ENCODE measurements at regions of chr12 and their contacts with region 1.

Region 1: GRCh38 chr12:68745904-68746571 is at the start of gene SLC35E3:
- DNase-seq: peak; percentile 94
- H3K4me3 Mint-ChIP-seq: peak within 1 kb of the TSS; percentile 96
- H3K27ac Mint-ChIP-seq: peak within 1 kb of the TSS; percentile 78
- H3K4me1 Mint-ChIP-seq: peaks cover 23% of the 10 kb centered on the region
- H3K27me3 Mint-ChIP-seq: no peaks in the 10 kb centered on the region
- CTCF ChIP-seq: no peak
- total RNA-seq, gene SLC35E3: 7.3 and 7.6 TPM in 2 replicates

Region 2: GRCh38 chr12:68358532-68359485 is 387.2 kb before region 1 on chr12:
- CTCF ChIA-PET with region 1: no interaction called
- POLR2A ChIA-PET with region 1: interaction called, 7 read pairs
- intact Hi-C with region 1: loop called (anchors 2 kb)
- DNase-seq: peak; percentile 76
- H3K4me3 Mint-ChIP-seq: no peak overlapping the region
- H3K27ac Mint-ChIP-seq: no peak overlapping the region
- H3K4me1 Mint-ChIP-seq: peaks cover 4% of the 10 kb centered on the region
- H3K27me3 Mint-ChIP-seq: no peaks in the 10 kb centered on the region
- CTCF ChIP-seq: peak; percentile 56

Region 3: DNA sequence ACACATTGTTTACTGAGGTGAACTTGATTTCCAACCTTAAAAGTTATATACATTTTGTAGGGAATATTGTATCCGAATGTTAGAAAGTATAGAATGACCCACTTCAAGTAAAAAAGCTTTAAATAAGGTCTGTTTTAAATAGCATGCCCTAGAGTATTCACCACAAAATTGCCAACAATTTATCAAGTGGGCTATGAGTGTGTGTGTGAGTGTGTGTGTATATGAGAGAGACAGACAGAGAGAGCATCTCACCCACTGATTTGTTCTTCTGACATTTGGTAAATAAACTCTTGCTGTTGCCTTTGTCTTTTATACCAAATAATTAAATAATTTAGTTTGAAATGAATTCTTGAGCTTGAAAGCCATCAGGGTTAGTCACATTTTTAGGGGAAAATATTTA is 165.1 kb before region 1 on chr12:
- CTCF ChIA-PET with region 1: no interaction called
- POLR2A ChIA-PET with region 1: no interaction called
- intact Hi-C with region 1: no loop called
- DNase-seq: no peak
- H3K4me3 Mint-ChIP-seq: no peak overlapping the region
- H3K27ac Mint-ChIP-seq: no peak overlapping the region
- H3K4me1 Mint-ChIP-seq: peaks cover 6% of the 10 kb centered on the region
- H3K27me3 Mint-ChIP-seq: no peaks in the 10 kb centered on the region
- CTCF ChIP-seq: no peak

Region 4: GRCh38 chr12:68781728-68782127 is 35.7 kb after region 1 on chr12:
- CTCF ChIA-PET with region 1: interaction called, 4 read pairs
- POLR2A ChIA-PET with region 1: interaction called, 30 read pairs
- intact Hi-C with region 1: loop called (anchors 1 kb)
- DNase-seq: no peak
- H3K4me3 Mint-ChIP-seq: no peak overlapping the region
- H3K27ac Mint-ChIP-seq: peak overlapping the region; percentile 17
- H3K4me1 Mint-ChIP-seq: peaks cover 40% of the 10 kb centered on the region
- H3K27me3 Mint-ChIP-seq: no peaks in the 10 kb centered on the region
- CTCF ChIP-seq: no peak

Region 5: GRCh38 chr12:68786929-68787328 is 40.9 kb after region 1 on chr12:
- CTCF ChIA-PET with region 1: interaction called, 7 read pairs
- POLR2A ChIA-PET with region 1: interaction called, 30 read pairs
- intact Hi-C with region 1: loop called (anchors 1 kb)
- DNase-seq: no peak
- H3K4me3 Mint-ChIP-seq: peak overlapping the region; percentile 61
- H3K27ac Mint-ChIP-seq: peak overlapping the region; percentile 97
- H3K4me1 Mint-ChIP-seq: peaks cover 30% of the 10 kb centered on the region
- H3K27me3 Mint-ChIP-seq: no peaks in the 10 kb centered on the region
- CTCF ChIP-seq: no peak

Region 6: DNA sequence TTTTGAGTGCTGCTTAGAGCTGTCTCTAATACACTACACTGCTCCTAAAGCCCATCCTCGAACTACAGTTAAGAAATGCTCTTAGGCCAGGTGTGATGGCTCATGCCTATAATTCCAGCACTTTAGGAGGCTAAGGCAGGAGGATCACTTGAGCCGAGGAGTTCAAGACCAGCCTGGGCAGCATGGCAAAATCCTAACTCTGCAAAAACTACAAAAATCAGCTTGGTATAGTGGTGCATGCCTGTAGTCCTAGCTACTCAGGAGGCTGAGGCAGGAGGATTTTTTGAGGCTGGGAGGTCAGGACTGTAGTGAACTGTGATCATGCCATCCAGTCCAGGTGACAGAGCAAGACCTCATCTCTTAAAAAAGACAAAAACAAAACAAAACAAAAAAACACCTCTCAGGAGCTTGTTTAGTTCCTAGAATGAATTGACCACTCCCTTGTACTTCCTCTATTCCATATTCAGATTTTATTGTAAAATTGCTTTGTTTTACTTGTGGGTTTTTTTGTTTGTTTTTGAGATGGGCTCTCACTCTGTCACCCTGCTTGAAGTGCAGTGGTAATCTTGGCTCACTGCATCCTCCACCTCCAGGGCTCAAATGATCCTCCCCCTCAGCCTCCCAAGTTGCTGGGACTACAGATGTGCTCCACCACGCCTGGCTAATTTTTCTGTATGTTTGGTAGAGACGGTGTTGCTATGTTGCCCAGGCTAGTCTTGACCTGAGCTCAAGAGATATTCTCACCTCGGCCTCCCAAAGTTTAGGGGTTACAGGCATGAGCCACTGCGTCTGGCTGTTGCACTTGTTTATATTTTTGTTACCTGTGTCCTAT is 75.5 kb after region 1 on chr12:
- CTCF ChIA-PET with region 1: no interaction called
- POLR2A ChIA-PET with region 1: interaction called, 9 read pairs
- intact Hi-C with region 1: loop called (anchors 5 kb)
- DNase-seq: no peak
- H3K4me3 Mint-ChIP-seq: peak overlapping the region; percentile 33
- H3K27ac Mint-ChIP-seq: no peak overlapping the region
- H3K4me1 Mint-ChIP-seq: peaks cover 19% of the 10 kb centered on the region
- H3K27me3 Mint-ChIP-seq: no peaks in the 10 kb centered on the region
- CTCF ChIP-seq: no peak

Region 7: GRCh38 chr12:68915055-68915454 is 169.0 kb after region 1 on chr12:
- CTCF ChIA-PET with region 1: no interaction called
- POLR2A ChIA-PET with region 1: no interaction called
- intact Hi-C with region 1: no loop called
- DNase-seq: peak; percentile 47
- H3K4me3 Mint-ChIP-seq: no peak overlapping the region
- H3K27ac Mint-ChIP-seq: peak overlapping the region; percentile 61
- H3K4me1 Mint-ChIP-seq: peaks cover 16% of the 10 kb centered on the region
- H3K27me3 Mint-ChIP-seq: no peaks in the 10 kb centered on the region
- CTCF ChIP-seq: no peak

Measured in MCF 10A (cell line).